ENCODE measurements at regions of chrX and their contacts with region 1.

Region 1: GRCh38 chrX:19990556-19991349 is at the start of gene BCLAF3:
- DNase-seq: peak; percentile 90 to 95 (median 90)
- ATAC-seq: peak; percentile 99 to 100 (median 100)
- H3K4me3 ChIP-seq: peak within 1 kb of the TSS; percentile 52 to 90 (median 77)
- H3K27ac ChIP-seq: peak within 1 kb of the TSS in 11 of 12 donors; percentile 44 to 80 (median 66)
- H3K4me1 ChIP-seq: peaks cover 0 to 12% (median 0%) of the 10 kb centered on the region in 12 donors
- H3K27me3 ChIP-seq: no peaks in the 10 kb centered on the region
- CTCF ChIP-seq: peak; percentile 65 to 86 (median 77)
- POLR2A ChIP-seq: no peak
- total RNA-seq, gene BCLAF3: 2.4 to 10.6 (median 7.8) TPM

Region 2: GRCh38 chrX:19403696-19404095 is 587.1 kb before region 1 on chrX:
- intact Hi-C with region 1: no loop called
- DNase-seq: no peak
- ATAC-seq: no peak
- H3K4me3 ChIP-seq: no peak overlapping the region
- H3K27ac ChIP-seq: no peak overlapping the region
- H3K4me1 ChIP-seq: no peaks in the 10 kb centered on the region
- H3K27me3 ChIP-seq: peaks cover 0 to 11% (median 0%) of the 10 kb centered on the region in 9 donors
- CTCF ChIP-seq: no peak
- POLR2A ChIP-seq: no peak

Region 3: DNA sequence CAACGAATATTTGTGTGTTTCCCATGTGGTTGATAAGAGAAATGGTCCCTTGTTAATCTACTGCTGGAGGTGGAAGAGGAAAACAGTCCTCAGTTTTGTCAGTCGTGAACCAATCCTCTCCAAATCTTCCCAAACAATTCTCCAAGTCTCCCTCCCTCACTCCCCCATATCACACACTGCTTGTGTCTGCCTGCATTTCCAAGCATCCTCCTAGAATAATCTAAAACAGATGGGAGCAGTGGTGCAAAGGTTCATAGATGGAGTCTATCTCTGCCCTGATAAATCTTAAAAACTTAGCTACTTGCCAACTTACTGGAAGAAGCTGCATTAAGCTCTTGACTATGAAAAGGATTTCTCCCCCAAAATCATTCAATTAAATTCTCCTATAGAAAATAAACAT is 59.6 kb before region 1 on chrX:
- intact Hi-C with region 1: loop called in 1 of 10 experiments (anchors 10 kb)
- DNase-seq: no peak
- ATAC-seq: no peak
- H3K4me3 ChIP-seq: no peak overlapping the region
- H3K27ac ChIP-seq: no peak overlapping the region
- H3K4me1 ChIP-seq: no peaks in the 10 kb centered on the region
- H3K27me3 ChIP-seq: peaks cover 0 to 3% (median 0%) of the 10 kb centered on the region in 9 donors
- CTCF ChIP-seq: no peak
- POLR2A ChIP-seq: no peak

Measured in heart left ventricle (tissue), 16 donors.